ENCODE measurements at regions of chr11 and their contacts with region 1.

Region 1: DNA sequence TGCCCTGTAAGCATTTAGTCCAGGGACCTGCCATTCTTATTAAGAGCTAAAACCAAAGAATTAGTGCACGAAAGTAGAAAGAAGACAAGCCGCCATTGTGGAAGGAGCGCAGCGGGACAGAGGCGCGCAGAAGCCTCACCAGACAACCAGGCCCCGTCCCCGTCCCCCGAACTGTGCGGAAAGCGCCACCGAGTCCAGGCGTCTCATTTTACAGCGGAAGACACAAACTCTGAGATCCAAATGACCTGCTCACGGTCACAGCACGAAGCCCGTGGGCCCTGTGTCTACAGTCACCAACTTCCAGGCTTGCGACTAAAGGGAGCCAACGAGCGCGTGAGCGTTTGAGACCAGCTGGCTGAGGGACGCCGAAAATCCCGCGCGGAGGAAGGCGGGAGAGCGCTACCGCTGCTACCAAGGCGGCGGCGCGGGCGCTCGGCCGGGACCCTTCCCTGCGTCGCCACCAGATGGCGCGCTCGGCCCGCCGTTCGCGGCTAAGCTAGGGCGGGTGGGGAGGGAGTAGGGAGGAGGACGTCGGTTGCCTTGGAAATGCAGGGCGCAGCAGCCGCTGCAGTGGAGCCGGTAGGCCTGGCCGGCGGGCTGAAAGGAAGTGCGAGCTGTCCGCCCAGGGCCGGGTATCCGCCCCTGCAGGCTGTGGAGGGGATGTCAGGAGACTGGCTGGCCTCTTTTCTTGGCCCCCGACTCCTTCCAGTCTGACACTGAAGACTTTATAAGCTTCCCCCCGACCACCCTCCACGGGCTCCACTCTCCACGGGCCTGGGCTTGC is 434 bp upstream of the CCDC83 start:
- DNase-seq: peak; percentile 89
- ATAC-seq: peak; percentile 96
- H3K4me3 Mint-ChIP-seq: peak overlapping the region; percentile 89
- H3K27ac Mint-ChIP-seq: peak overlapping the region; percentile 93
- H3K4me1 Mint-ChIP-seq: peaks cover 10% of the 10 kb centered on the region
- H3K27me3 Mint-ChIP-seq: no peaks in the 10 kb centered on the region
- CTCF ChIP-seq: peak; percentile 89

Region 2: GRCh38 chr11:85694386-85694980 is 160.3 kb before region 1 on chr11:
- CTCF ChIA-PET with region 1: interaction called, 14 read pairs
- POLR2A ChIA-PET with region 1: no interaction called
- intact Hi-C with region 1: no loop called
- DNase-seq: no peak
- ATAC-seq: peak; percentile 55
- H3K4me3 Mint-ChIP-seq: no peak overlapping the region
- H3K27ac Mint-ChIP-seq: no peak overlapping the region
- H3K4me1 Mint-ChIP-seq: peaks cover 15% of the 10 kb centered on the region
- H3K27me3 Mint-ChIP-seq: no peaks in the 10 kb centered on the region
- CTCF ChIP-seq: peak; percentile 25

Region 3: GRCh38 chr11:85826116-85826855 is 28.5 kb before region 1 on chr11:
- CTCF ChIA-PET with region 1: interaction called, 11 read pairs
- POLR2A ChIA-PET with region 1: no interaction called
- intact Hi-C with region 1: no loop called
- DNase-seq: peak; percentile 39
- ATAC-seq: no peak
- H3K4me3 Mint-ChIP-seq: no peak overlapping the region
- H3K27ac Mint-ChIP-seq: no peak overlapping the region
- H3K4me1 Mint-ChIP-seq: peaks cover 62% of the 10 kb centered on the region
- H3K27me3 Mint-ChIP-seq: no peaks in the 10 kb centered on the region
- CTCF ChIP-seq: peak; percentile 17

Region 4: DNA sequence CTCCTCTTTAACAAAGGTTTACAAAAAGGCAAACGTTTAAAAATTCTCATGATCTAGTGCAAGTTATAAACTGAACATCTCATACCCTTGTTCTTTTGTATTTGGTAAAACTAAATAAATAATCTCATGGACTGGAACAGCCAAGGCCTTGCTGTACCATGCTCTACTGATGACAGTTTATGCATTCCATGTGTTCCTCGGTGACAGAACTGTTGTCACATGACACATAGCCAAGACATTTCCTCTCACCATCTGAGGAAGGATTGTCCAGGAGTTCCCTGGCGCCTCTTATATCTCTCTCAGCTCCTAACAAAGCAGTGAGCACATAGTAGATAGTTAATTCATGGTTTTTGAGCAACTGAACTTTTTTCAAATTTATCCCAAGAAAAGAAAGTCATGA is 13.0 kb after region 1 on chr11:
- CTCF ChIA-PET with region 1: interaction called, 29 read pairs
- POLR2A ChIA-PET with region 1: interaction called, 3 read pairs
- intact Hi-C with region 1: no loop called
- DNase-seq: no peak
- ATAC-seq: no peak
- H3K4me3 Mint-ChIP-seq: no peak overlapping the region
- H3K27ac Mint-ChIP-seq: no peak overlapping the region
- H3K4me1 Mint-ChIP-seq: no peaks in the 10 kb centered on the region
- H3K27me3 Mint-ChIP-seq: no peaks in the 10 kb centered on the region
- CTCF ChIP-seq: no peak

Region 5: GRCh38 chr11:86138958-86139357 is 284.2 kb after region 1 on chr11:
- CTCF ChIA-PET with region 1: no interaction called
- POLR2A ChIA-PET with region 1: no interaction called
- intact Hi-C with region 1: no loop called
- DNase-seq: peak; percentile 53
- ATAC-seq: peak; percentile 84
- H3K4me3 Mint-ChIP-seq: peak overlapping the region; percentile 9
- H3K27ac Mint-ChIP-seq: peak overlapping the region; percentile 77
- H3K4me1 Mint-ChIP-seq: peaks cover 32% of the 10 kb centered on the region
- H3K27me3 Mint-ChIP-seq: no peaks in the 10 kb centered on the region
- CTCF ChIP-seq: no peak

Region 6: GRCh38 chr11:86456052-86456939 is 601.5 kb after region 1 on chr11:
- CTCF ChIA-PET with region 1: interaction called, 12 read pairs
- POLR2A ChIA-PET with region 1: no interaction called
- intact Hi-C with region 1: no loop called
- DNase-seq: peak; percentile 92
- ATAC-seq: peak; percentile 93
- H3K4me3 Mint-ChIP-seq: no peak overlapping the region
- H3K27ac Mint-ChIP-seq: no peak overlapping the region
- H3K4me1 Mint-ChIP-seq: peaks cover 18% of the 10 kb centered on the region
- H3K27me3 Mint-ChIP-seq: no peaks in the 10 kb centered on the region
- CTCF ChIP-seq: peak; percentile 94

Measured in activated CD8-positive, alpha-beta T cell treated with anti-CD3 and anti-CD28 coated beads for 36 hours (primary cell).